Dorsolateral prefrontal cortex (tissue), 120 donors: ENCODE measurements at regions of chrX and their contacts with region 1.

Region 1: DNA sequence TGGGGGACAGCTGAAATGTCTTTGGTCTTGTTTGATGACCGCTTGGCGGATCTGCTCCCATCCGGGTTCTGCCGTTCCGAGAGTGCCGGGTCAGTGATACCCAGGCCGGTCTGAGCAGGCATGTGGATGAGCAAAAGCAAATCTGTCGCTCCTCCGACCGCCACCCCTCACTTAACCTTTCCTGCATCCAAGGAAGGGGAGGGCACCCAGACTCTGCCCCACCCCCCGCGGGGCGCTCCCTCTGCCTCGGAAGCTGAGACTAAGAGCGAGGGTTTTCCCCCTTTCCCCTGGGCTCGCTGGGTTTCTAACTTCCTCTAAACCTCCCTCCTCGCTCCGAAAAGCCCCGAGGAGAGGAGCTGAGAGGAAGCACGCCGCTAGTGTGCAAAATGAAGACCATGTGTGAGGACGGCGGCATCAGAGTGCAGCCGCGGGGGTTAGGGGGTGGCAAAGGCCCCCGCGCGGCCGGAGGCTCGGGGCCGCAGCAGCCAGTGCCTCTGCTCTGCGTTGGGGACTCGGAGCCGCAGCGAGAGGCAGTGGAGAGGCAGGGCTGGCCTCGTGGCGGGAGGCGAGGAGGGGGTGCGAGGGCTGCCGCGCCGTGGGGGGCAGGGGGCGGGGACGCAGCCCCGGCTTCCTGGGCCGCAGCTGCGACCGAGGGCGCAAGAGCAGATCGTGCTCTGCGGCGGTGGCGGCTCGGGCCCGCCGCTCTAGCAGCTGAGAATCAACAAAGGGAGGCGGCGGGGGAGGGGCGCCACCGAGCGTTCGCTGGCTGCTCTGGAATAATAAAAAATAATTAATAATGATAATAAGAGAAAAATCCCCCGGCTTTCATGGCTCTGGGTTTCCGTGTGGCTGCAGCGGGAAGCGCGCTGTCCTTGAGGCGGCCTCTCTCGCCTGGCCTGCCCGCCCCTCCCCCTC is 55.8 kb upstream of the BCOR start:
- DNase-seq: peak in 3 of 10 donors; percentile 25 to 66 (median 46)
- H3K4me3 ChIP-seq: peak overlapping the region; percentile 20 to 70 (median 54)
- H3K27ac ChIP-seq: peak overlapping the region in 58 of 59 donors; percentile 12 to 88 (median 82)
- H3K27me3 ChIP-seq: peaks cover 0 to 100% (median 73%) of the 10 kb centered on the region in 45 donors
- CTCF ChIP-seq: peak in 39 of 56 donors; percentile 7 to 58 (median 36)

Region 2: DNA sequence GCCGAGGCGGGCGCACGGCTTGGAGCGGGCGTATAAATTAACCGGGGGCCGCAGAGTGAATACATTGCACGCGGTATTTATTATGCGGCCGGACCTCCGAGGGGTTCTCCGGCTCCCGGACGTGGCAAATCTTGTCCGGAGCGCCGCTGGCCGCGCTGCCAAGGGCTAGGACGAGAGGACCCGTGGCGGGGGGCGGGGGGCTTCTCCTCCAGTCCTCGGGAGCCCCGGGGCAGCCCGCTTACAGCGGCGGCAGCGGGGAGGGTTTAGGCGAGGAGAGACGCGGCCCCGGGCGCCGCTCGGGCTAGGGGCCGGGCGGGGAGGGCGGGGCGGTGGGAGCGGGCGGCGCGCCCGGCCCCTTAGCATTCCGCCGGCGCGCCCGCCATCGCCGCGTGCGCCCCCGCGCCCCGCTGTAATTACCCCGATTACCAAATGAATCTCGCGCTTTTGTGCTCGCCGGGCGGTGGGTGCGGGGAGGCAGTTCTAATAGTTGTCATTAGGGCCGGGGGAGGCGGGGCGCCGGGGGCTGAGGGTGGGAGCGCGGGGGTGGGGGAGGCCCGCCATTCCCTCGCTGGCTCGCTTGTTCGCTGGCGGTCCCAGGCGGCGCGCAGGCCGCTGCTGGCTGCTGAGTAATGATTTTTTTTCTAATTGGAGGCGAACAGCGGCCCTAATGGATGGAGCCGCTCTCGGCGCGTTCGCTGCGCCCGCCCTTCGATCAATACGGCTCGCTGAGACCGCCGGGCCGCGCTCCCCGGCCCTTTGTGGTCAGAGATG is 332.5 kb before region 1 on chrX:
- intact Hi-C with region 1: loop called (anchors 5 to 10 kb)
- DNase-seq: peak in 2 of 10 donors; percentile 32 to 47
- H3K4me3 ChIP-seq: peak overlapping the region; percentile 14 to 67 (median 47)
- H3K27ac ChIP-seq: peak overlapping the region in 3 of 59 donors; percentile 2 to 48 (median 5)
- H3K27me3 ChIP-seq: peaks cover 0 to 95% (median 39%) of the 10 kb centered on the region in 45 donors
- CTCF ChIP-seq: no peak

Region 3: DNA sequence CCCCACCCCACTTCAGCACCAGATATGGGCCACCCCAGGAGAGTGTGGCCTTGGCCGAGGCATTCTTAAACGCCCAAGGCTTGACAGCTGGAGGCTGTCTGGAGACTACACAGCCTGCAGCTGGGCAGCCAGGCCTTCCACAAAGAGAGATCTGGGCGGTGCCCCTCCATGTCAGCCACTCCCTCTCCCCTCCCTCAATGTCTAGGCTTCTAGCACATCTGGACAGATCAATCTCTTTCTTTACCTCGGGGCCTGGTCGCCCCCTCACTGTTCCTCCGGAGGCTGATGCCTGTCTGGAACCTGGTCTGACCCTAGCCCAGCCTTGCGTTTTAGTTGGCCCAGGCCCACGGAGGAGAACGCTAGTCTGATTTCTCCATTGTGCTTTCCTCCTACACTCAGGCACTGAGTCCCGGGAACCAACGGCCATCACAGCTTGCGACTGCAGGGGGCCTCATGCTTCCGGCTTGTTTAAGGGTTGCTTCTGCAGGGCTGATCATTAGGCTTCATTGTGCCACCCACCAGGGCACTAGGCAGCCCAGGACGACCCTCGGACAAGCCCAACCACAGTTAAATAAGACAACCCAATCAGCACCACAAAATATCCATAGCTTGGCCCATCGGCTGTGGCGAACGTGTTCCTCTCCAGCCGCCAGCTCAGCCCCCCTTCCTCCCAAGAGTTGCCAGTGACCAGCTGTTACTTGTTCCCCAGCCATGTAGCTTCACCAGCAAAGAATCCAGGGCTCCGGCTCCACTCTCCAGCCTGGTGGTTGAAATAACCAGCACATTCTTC is 256.4 kb before region 1 on chrX:
- intact Hi-C with region 1: loop called in 1 of 2 experiments (anchors 10 kb)
- DNase-seq: peak in 1 of 10 donors; percentile 40
- H3K4me3 ChIP-seq: no peak overlapping the region
- H3K27ac ChIP-seq: no peak overlapping the region
- H3K27me3 ChIP-seq: peaks cover 0 to 85% (median 28%) of the 10 kb centered on the region in 45 donors
- CTCF ChIP-seq: peak in 2 of 56 donors; percentile 6 to 9

Region 4: DNA sequence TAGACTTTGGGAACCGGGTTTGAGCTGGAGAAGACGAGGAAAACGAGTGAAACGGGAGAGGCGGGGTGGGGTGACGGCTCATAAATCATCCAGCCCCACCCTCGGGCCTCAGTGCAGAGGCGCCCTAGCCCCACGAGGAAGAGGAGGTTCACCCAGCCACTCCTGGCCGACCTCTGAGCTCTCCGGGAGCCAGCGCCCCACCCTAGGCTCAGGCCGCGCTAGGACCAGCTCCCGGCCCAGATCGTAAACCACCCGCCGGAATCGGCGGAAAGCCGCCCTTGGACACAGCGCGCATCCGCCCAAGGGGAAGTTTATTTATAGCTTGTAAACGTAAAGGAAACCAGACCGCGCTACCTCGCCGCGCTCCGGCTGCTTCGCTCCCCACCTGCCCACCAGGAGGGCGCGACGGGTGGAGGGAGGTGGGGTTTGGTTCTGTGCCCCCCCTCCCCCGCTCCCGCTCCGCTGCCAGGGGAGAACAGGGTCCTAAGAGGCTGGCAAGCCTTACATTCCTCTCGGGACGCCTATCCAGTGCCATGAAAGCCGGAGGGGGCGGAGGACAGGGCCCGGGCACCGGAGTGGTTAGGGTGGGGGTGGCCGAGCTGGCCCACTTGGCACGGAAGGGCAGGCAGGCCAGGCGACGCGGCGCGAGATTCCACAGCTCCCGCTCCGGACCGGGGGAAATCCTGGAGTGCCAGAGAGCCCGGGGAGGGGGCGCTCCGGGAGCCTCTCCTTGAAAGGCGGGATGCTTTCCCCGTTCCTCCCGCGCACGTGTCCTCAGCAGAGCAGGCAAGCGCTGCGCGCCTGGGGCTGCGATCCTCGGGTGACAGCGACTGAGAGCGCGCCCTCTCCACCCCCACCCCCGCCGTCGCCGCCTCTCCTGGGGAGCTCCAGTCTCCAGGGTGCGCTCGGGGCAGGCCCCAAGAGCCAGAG is 140.1 kb before region 1 on chrX:
- intact Hi-C with region 1: loop called (anchors 2 kb)
- DNase-seq: peak in 8 of 10 donors; percentile 18 to 71 (median 55)
- H3K4me3 ChIP-seq: peak overlapping the region; percentile 23 to 71 (median 56)
- H3K27ac ChIP-seq: peak overlapping the region in 56 of 59 donors; percentile 41 to 89 (median 81)
- H3K27me3 ChIP-seq: peaks cover 0 to 88% (median 37%) of the 10 kb centered on the region in 45 donors
- CTCF ChIP-seq: peak in 1 of 56 donors; percentile 14

Region 5: GRCh38 chrX:40108959-40109287 is 44.7 kb before region 1 on chrX:
- intact Hi-C with region 1: loop called (anchors 2 kb)
- DNase-seq: peak in 7 of 10 donors; percentile 54 to 81 (median 59)
- H3K4me3 ChIP-seq: peak overlapping the region; percentile 12 to 75 (median 58)
- H3K27ac ChIP-seq: peak overlapping the region in 56 of 59 donors; percentile 38 to 92 (median 82)
- H3K27me3 ChIP-seq: peaks cover 0 to 94% (median 49%) of the 10 kb centered on the region in 45 donors
- CTCF ChIP-seq: peak in 1 of 56 donors; percentile 18

Region 6: DNA sequence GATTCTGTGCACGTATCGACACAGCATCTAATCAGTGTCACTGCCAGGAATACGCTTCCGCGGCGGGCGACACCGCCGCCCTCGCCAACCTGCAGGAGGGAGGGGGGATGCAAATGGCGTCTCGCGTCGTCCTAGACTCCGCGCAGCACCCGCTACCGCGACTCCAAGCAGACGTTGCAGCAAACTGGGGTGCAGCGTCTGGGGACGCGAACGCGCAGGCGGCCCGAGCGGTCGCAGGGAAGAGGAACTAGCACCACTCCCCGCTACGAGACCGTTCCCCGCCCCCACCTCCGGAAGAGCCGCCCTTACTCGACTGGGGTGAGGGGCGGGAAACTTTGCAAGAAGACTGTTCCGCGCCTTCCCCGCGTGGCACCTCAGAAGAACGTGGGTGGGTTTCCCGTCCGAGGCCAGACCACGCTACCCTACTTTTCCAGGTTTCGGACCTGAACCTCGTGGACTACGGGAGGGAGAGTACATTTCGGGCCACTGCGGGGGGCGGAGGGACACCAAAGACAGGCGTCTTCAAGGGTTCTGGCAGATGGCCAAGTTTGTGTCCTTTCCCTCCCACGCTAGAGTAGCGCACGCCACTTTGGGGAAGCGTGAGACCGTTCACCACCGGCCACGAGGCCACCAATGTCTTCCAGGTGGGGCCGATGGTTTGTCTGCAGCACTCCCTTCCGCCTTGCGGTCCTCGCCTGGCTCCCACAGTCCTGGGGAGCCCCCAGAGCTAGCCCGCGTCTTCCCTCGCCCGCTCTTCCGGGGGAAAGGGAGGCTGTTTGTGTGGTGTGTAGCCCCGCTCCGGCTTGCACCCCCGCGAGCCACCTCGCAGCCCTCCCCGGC is 22.1 kb after region 1 on chrX:
- intact Hi-C with region 1: loop called (anchors 2 kb)
- DNase-seq: peak in 6 of 10 donors; percentile 25 to 69 (median 49)
- H3K4me3 ChIP-seq: peak overlapping the region; percentile 30 to 72 (median 61)
- H3K27ac ChIP-seq: peak overlapping the region; percentile 61 to 97 (median 90)
- H3K27me3 ChIP-seq: peaks cover 0 to 99% (median 55%) of the 10 kb centered on the region in 45 donors
- CTCF ChIP-seq: peak in 1 of 56 donors; percentile 3